ENCODE measurements at regions of chr16 and their contacts with region 1.

Region 1: DNA sequence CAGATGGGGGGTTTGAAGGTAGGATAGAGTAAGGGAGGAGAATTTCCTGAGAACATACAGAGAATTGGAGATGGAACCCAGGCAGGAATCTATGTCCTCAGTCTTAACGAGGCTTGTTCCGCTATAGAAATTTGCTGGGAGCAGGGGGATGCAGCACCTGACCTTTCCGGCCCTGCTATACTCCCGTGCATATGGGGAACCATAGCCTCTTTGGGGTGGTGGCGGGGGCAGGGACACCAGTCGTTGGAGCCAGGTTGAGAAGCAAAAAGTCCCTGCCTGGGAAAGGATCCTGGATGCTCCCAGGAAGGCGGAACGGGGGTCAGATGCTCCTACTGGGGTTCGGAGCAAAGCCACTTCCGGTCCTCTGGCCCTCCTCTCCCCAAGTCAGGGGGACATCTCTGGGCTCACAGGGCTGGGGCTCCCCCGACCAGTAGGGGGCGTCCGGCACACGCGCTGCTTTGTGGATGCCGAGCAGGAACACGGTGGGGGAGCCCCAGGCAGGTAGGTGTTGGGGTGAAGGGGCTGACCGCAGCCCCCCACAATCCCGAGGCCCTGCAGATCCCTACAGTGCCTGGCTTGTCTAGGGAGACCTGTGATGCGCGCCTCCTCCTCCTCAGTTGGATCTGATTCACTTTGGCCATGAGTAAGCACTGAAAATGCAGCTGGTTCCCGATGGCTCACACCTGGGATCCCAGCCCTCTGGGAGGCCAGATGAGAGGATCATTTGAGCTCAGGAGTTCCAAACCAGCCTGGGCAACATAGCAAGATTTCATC is 15.5 kb upstream of the TFAP4 start:
- DNase-seq: peak; percentile 91
- CTCF ChIP-seq: peak; percentile 100

Region 2: GRCh38 chr16:4330277-4330874 is 42.0 kb after region 1 on chr16:
- in situ Hi-C with region 1: loop called (anchors 5 kb)
- DNase-seq: peak; percentile 93
- CTCF ChIP-seq: peak; percentile 97

Region 3: GRCh38 chr16:4787627-4788482 is 499.5 kb after region 1 on chr16 and contains the start of gene SEPTIN12:
- in situ Hi-C with region 1: no loop called
- DNase-seq: no peak
- CTCF ChIP-seq: no peak

Measured in GM13977 (cell line).